WTC11 (cell line): ENCODE measurements at regions of chr17 and their contacts with region 1.

Region 1: GRCh38 chr17:7997186-7997585 is 5.2 kb upstream of the GUCY2D start:
- DNase-seq: peak; percentile 69
- ATAC-seq: peak; percentile 92
- H3K4me3 Mint-ChIP-seq: no peak overlapping the region
- H3K27ac Mint-ChIP-seq: peak overlapping the region; percentile 27; the same call in 1 of the 2 replicates
- H3K4me1 Mint-ChIP-seq: peaks cover 9% of the 10 kb centered on the region
- H3K27me3 Mint-ChIP-seq: peaks cover 26% of the 10 kb centered on the region
- CTCF ChIP-seq: 0 out of 2 replicates have a peak, but pooled peaks have one; percentile 19

Region 2: DNA sequence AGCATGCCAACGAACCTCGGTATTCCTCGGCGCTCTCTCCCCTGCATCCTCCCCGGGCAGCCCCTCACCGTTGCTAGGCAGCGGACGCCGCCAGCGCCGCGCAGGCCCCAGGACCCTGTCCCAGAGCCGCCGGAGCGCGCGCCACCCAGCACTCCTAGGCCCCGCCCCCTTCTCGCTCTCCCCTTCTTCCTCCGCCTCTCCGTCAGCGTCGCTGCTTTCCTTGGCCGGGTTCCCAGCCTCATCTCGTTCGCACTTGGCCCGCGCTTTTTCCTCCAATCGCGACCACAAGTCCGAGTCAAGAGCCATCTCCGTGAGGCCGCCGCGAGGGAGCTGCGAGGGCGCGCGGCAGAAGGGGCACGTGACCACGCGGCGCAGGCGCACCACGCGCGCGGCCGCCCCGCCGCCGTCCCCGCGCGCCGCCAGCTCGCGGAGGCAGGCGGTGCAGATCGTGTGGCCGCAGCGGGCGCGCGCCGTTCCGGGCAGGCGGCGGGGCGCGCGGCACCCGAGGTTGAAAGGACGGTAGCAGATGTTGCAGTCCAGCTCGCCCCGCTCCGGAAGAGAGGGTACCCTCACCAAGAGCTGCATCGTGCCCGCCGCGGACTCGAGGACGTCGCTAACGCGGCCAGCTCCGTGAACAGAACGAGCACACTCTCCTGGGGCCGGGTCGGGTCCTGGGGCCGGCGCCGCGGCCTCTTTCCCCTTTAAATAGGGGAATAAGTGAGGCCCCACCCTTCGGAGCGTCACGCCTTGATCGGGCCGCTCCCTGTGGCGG is 81.4 kb before region 1 on chr17 and contains the start of gene RNF227:
- CTCF ChIA-PET with region 1: interaction called, 11 read pairs
- POLR2A ChIA-PET with region 1: no interaction called
- DNase-seq: peak; percentile 90
- ATAC-seq: peak; percentile 94
- H3K4me3 Mint-ChIP-seq: peak within 1 kb of the TSS; percentile 72
- H3K27ac Mint-ChIP-seq: no peak within 1 kb of the TSS
- H3K4me1 Mint-ChIP-seq: peaks cover 13% of the 10 kb centered on the region
- H3K27me3 Mint-ChIP-seq: peaks cover 70% of the 10 kb centered on the region
- CTCF ChIP-seq: no peak
- total RNA-seq, gene RNF227: 0.83 to 1.8 TPM (median 0.94 TPM) in 3 replicates

Region 3: GRCh38 chr17:7931709-7932482 is 65.3 kb before region 1 on chr17 and contains the starts of genes CNTROB and TRAPPC1:
- CTCF ChIA-PET with region 1: interaction called, 15 read pairs
- POLR2A ChIA-PET with region 1: no interaction called
- DNase-seq: peak; percentile 98
- ATAC-seq: peak; percentile 90
- H3K4me3 Mint-ChIP-seq: peak within 1 kb of the TSS; percentile 100
- H3K27ac Mint-ChIP-seq: peak within 1 kb of the TSS; percentile 97
- H3K4me1 Mint-ChIP-seq: peaks cover 32% of the 10 kb centered on the region
- H3K27me3 Mint-ChIP-seq: peaks cover 37% of the 10 kb centered on the region
- CTCF ChIP-seq: no peak
- total RNA-seq, gene CNTROB: 37.0 to 39.7 TPM (median 38.5 TPM) in 3 replicates
- total RNA-seq, gene TRAPPC1: 99.7 to 135 TPM (median 125 TPM) in 3 replicates

Region 4: DNA sequence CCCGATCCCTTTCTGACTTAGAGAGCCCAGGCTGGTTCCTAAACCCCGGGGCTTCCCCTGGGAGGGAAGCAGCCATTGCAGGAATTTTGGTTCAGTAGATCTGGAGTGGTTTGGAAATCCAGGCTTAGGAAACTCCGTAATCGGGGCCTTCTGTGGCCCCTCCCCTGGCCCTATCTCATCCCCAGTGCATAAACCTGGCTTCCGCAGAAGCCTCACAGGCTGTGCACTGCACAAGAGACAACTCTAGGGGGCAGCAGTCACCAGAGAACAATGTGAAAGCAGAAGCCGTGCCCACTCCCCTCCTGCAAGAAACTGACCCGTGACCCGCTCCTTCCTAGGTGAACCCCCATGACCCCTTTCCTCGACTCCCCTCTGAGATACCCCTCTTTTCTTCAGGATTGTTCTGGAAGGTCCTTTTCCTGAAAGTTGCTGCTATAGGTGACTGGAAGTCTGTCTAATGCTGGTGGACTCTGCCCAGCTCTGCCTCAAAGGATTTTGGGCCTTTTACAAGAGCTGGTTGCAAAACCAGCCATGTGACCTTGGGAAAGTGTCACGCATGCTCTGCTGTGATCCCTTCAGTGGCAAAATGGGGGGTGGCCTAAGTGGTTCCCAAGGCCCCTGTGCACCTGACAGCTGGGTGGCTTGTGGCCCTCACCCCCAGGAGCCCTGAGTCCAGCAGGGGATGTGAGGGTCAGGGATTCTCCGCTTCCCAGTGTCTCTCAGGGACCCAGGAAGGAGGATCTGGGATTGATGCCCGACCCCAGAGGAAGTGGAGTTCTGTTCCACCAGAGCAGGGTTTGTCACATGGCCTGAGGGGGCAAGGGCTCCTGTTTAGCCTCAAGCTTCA is 19.7 kb after region 1 on chr17:
- CTCF ChIA-PET with region 1: interaction called, 18 read pairs
- POLR2A ChIA-PET with region 1: no interaction called
- DNase-seq: peak; percentile 92
- ATAC-seq: peak; percentile 90
- H3K4me3 Mint-ChIP-seq: peak overlapping the region; percentile 84
- H3K27ac Mint-ChIP-seq: no peak overlapping the region
- H3K4me1 Mint-ChIP-seq: 0 out of 2 replicates have a peak, but pooled peaks cover 2% of the 10 kb centered on the region
- H3K27me3 Mint-ChIP-seq: peaks cover 23% of the 10 kb centered on the region
- CTCF ChIP-seq: peak; percentile 85